ENCODE measurements at regions of chr3 and their contacts with region 1.

Region 1: GRCh38 chr3:49689046-49689907 is at the starts of genes MST1 and RNF123:
- DNase-seq: peak; percentile 92
- H3K4me3 ChIP-seq: peak within 1 kb of the TSS; percentile 65 to 99 (median 81)
- H3K27ac ChIP-seq: peak within 1 kb of the TSS; percentile 20
- H3K4me1 ChIP-seq: peaks cover 9% of the 10 kb centered on the region
- H3K27me3 ChIP-seq: peaks cover 0 to 2% of the 10 kb centered on the region in 2 experiments
- CTCF ChIP-seq: peak; percentile 9 to 41
- POLR2A ChIP-seq: peak; percentile 64
- total RNA-seq, gene MST1: 6.1 and 8.7 TPM in 2 replicates
- total RNA-seq, gene RNF123: 43.4 and 51.0 TPM in 2 replicates

Region 2: GRCh38 chr3:49673715-49674496 is 15.4 kb before region 1 on chr3 and contains the start of gene APEH:
- CTCF ChIA-PET with region 1: no interaction called
- POLR2A ChIA-PET with region 1: no interaction called
- dilution Hi-C with region 1: no loop called
- intact Hi-C with region 1: loop called (anchors 1 kb)
- DNase-seq: peak; percentile 95
- H3K4me3 ChIP-seq: peak within 1 kb of the TSS; percentile 41 to 47 (median 44)
- H3K27ac ChIP-seq: peak within 1 kb of the TSS; percentile 40
- H3K4me1 ChIP-seq: peaks cover 4% of the 10 kb centered on the region
- H3K27me3 ChIP-seq: no peaks in the 10 kb centered on the region
- CTCF ChIP-seq: no peak
- POLR2A ChIP-seq: peak; percentile 84
- total RNA-seq, gene APEH: 68.2 and 77.9 TPM in 2 replicates